H1 (cell line): ENCODE measurements at regions of chr19 and their contacts with region 1.

Region 1: GRCh38 chr19:50804420-50805272 is 14.4 kb downstream of the ACP4 start:
- DNase-seq: peak; percentile 96 to 98
- H3K4me3 ChIP-seq: peak overlapping the region; percentile 88 to 99 (median 97)
- H3K27ac ChIP-seq: peak overlapping the region; percentile 100
- H3K4me1 ChIP-seq: peaks cover 0 to 11% (median 5%) of the 10 kb centered on the region in 4 experiments; a peak in 5 of 7 replicates
- H3K27me3 ChIP-seq: peaks cover 0 to 4% (median 3%) of the 10 kb centered on the region in 4 experiments; a peak in 3 of 7 replicates
- CTCF ChIP-seq: no peak
- EP300 ChIP-seq: no peak; a peak in 1 of 3 replicates
- POLR2A ChIP-seq: peak; percentile 98 to 99
- RAD21 ChIP-seq: peak in 1 of 2 experiments; percentile 0; a peak in 1 of 4 replicates

Region 2: DNA sequence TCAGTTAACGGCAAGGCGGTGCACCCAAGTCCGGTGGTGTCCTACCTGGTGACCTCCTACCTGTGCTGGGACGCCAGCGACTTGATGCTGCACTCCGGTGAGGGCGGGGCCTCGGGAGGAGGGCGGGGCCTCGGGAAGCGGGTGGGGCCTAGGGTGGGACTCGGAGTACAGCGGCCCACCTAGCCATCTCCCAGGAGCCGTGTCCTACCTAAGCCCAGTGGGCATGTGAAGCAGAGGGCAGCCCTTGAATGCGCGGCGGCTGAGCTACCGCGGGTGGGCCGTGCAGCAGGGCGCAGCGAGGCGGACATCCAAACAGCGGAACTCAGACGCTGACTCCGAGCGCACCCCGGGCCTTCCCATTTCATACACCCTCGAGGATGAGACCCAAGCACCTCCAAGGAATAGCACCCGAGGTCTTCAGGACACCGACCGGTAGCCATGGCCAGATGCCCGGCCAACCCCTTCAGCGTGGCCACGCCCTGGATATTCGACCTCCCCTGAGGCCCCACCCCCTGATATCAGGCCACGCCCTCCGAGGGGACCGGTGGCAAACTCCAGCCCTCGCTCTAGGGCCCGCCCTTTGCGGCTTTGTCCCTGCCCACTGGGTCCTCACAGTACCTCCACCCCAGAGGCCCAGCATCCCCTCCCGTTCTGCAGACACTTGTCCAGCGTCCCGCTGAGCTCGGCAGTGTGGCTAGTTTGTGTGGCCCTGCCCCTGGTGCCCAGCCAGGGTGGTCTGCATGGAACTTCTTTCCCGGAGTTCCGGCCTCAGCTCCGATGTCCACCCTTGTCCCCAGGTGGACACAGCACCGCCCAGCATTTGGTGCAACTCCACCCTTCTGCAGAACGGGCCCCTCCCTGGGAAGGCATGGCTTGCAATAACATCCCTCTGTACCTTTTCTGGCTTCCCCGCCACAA is 13.6 kb after region 1 on chr19:
- CTCF ChIA-PET with region 1: interaction called, 3 read pairs
- POLR2A ChIA-PET with region 1: interaction called, 275 read pairs
- DNase-seq: peak; percentile 65 to 99
- H3K4me3 ChIP-seq: peak overlapping the region; percentile 48 to 84 (median 82)
- H3K27ac ChIP-seq: no peak overlapping the region
- H3K4me1 ChIP-seq: peaks cover 5 to 26% (median 20%) of the 10 kb centered on the region in 4 experiments
- H3K27me3 ChIP-seq: peaks cover 9 to 37% (median 33%) of the 10 kb centered on the region in 4 experiments
- CTCF ChIP-seq: no peak
- EP300 ChIP-seq: no peak
- POLR2A ChIP-seq: peak in 1 of 2 experiments; percentile 78; a peak in 2 of 3 replicates
- RAD21 ChIP-seq: no peak

Region 3: DNA sequence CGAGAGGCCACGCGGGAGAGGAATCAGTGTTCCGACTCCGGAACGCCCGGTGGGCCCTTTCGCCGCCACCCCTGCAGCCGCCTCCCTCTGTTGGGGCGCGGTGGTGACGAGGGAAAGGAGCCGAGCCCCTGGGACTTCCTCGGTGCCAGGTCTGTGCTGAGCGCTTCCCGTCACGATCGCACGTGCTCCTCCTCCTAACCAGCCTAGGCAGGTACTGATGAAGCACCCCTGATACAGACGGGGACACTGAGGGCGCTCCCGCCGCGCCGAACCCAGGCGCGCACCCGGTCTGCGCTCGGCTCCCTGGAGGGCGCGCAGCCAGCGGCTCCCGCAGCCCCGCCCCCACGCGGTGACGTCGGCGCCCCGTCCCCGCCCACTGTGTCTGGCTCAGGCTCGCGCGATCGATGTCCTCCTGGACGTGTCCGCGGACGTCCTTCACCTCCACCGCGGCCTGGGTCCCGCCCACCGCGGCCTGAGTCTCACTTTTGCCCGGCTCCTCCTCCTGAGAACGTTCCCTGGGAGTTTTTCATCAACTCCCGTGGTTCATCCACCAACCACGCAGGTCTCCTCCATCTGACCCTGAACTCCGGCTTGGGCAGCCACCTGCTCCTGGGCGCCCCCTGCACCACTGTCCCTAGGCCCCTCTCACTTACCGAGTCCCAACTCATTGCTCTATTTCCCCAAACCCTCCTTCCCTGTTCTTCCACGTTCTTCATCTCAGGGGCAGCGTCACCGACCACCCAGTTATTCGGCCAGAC is 31.3 kb after region 1 on chr19:
- CTCF ChIA-PET with region 1: no interaction called
- POLR2A ChIA-PET with region 1: interaction called, 18 read pairs
- DNase-seq: peak in 1 of 2 experiments; percentile 95
- H3K4me3 ChIP-seq: peak overlapping the region; percentile 59 to 76 (median 64)
- H3K27ac ChIP-seq: no peak overlapping the region
- H3K4me1 ChIP-seq: peaks cover 0 to 7% (median 2%) of the 10 kb centered on the region in 4 experiments; a peak in 3 of 7 replicates
- H3K27me3 ChIP-seq: peaks cover 0 to 22% (median 7%) of the 10 kb centered on the region in 4 experiments; a peak in 6 of 7 replicates
- CTCF ChIP-seq: peak in 2 of 3 experiments; percentile 3 to 26; a peak in 2 of 4 replicates
- EP300 ChIP-seq: no peak
- POLR2A ChIP-seq: peak in 1 of 2 experiments; percentile 71; a peak in 2 of 3 replicates
- RAD21 ChIP-seq: no peak

Region 4: DNA sequence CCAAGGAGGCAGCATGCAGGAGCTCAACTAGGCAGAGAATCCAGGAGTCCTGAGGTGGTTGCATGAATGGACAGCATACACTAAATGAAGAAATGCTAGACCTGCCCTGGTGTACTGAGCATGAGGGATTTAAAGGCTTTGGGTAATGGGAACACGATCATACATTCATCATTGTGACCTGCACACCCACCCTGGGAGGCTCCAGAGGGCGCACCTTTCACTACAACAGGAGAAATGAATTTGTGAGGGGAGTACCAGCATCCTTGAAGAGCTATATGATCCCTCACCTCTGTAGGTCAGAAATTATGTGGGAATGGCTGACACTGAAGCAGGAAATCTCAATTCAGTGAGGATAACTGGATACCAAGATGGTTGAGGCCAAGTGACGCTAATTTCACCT is 77.5 kb after region 1 on chr19:
- CTCF ChIA-PET with region 1: no interaction called
- POLR2A ChIA-PET with region 1: interaction called, 15 read pairs
- DNase-seq: no peak
- H3K4me3 ChIP-seq: no peak overlapping the region
- H3K27ac ChIP-seq: no peak overlapping the region
- H3K4me1 ChIP-seq: peaks cover 0 to 9% (median 1%) of the 10 kb centered on the region in 4 experiments; a peak in 2 of 7 replicates
- H3K27me3 ChIP-seq: peaks cover 0 to 4% (median 1%) of the 10 kb centered on the region in 4 experiments; a peak in 4 of 7 replicates
- CTCF ChIP-seq: peak in 2 of 3 experiments; percentile 14 to 19; a peak in 3 of 4 replicates
- EP300 ChIP-seq: no peak
- POLR2A ChIP-seq: no peak
- RAD21 ChIP-seq: peak in 1 of 2 experiments; percentile 6; a peak in 1 of 4 replicates

Region 5: DNA sequence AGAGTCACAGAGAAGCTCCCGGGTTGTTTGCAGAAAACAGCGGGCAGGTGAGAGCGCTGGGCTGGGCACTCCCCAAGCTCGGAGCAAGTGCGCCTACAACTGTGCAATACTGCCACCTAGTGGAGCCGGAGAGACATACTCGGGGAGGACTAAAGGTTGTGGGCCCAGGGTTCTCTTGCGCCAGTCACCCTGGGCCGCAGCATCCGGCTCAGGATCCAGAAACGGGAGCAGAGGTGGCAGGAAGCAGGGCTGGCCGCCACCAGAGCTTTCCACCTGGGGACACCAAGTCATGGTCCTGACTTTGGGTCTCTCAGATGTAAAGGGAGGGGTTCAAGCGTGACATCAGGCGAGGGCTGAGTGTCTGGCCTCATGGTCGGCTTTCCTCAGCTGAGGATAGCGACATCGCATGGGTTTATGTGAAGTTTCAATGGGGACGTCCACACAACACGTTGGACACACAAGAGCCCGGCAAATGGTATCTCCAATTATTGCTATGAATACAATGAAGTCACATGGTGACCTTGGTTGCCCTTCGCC is 117.7 kb after region 1 on chr19:
- CTCF ChIA-PET with region 1: interaction called, 4 read pairs
- POLR2A ChIA-PET with region 1: interaction called, 29 read pairs
- DNase-seq: peak; percentile 59 to 87
- H3K4me3 ChIP-seq: 0 out of 8 replicates have a peak overlapping the region, but pooled peaks of 1 of the 4 experiments have one; percentile 0
- H3K27ac ChIP-seq: no peak overlapping the region
- H3K4me1 ChIP-seq: peaks cover 0 to 7% (median 5%) of the 10 kb centered on the region in 4 experiments; a peak in 5 of 7 replicates
- H3K27me3 ChIP-seq: 0 out of 7 replicates have a peak, but pooled peaks cover 0 to 2% (median 0%) of the 10 kb centered on the region in 4 experiments
- CTCF ChIP-seq: peak; percentile 83 to 98 (median 90)
- EP300 ChIP-seq: no peak
- POLR2A ChIP-seq: no peak
- RAD21 ChIP-seq: peak; percentile 96 to 98